ENCODE measurements at regions of chr7 and their contacts with region 1.

Region 1: GRCh38 chr7:139118234-139118804 is 8.8 kb upstream of the ZC3HAV1 start:
- DNase-seq: no peak
- ATAC-seq: peak; percentile 23
- H3K4me3 Mint-ChIP-seq: peak overlapping the region; percentile 68
- H3K27ac Mint-ChIP-seq: peak overlapping the region; percentile 91
- H3K4me1 Mint-ChIP-seq: peaks cover 31% of the 10 kb centered on the region
- H3K27me3 Mint-ChIP-seq: no peaks in the 10 kb centered on the region
- CTCF ChIP-seq: no peak

Region 2: DNA sequence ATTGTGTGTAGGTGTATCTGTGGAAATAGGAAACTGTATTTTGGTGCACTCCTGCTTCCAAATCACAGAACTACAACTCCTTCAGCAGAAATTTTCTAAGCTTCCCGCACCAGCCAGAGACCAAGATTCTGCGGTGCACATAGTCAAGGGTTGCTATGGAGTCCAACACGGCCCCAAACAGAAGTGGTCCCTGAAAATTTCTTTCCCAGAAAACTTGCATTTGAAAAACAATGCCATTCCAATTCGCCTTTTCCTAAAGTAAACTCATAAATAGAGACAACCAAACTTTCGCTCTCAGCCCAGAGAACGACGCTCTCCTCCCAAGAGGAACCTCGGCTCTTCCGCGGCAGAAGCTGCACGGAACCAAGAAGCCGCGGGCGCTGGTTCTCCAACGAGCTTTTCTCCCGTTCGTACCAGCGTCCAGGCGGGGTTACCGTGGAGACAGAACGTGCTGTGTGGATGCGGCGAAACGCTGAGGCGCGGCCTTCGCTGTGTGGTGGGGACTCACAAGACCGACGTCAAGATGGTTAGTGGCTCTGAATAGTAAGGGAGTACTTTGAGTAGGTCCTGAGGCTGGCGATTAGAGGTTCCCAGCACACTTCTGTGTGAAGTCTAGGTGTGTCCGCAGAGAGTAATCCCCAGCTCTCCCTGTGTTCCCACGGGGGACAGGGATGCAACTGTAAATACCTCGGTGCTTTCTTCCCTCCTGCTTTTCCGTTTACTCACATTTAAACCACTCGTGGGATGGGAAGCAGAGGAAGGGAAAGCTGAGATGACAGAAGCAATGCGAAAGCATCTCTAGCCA is 15.2 kb after region 1 on chr7:
- CTCF ChIA-PET with region 1: interaction called, 3 read pairs
- POLR2A ChIA-PET with region 1: interaction called, 22 read pairs
- intact Hi-C with region 1: loop called (anchors 1 kb)
- DNase-seq: peak; percentile 77
- ATAC-seq: peak; percentile 98
- H3K4me3 Mint-ChIP-seq: peak overlapping the region; percentile 87
- H3K27ac Mint-ChIP-seq: peak overlapping the region; percentile 81
- H3K4me1 Mint-ChIP-seq: peaks cover 9% of the 10 kb centered on the region
- H3K27me3 Mint-ChIP-seq: no peaks in the 10 kb centered on the region
- CTCF ChIP-seq: no peak